Activated CD8-positive, alpha-beta memory T cell treated with anti-CD3 and anti-CD28 coated beads, Interleukin-2, amount 10 ng/mL, durations not matched to agents 7 days and 5 days (primary cell): ENCODE measurements at regions of chr11 and their contacts with region 1.

Region 1: DNA sequence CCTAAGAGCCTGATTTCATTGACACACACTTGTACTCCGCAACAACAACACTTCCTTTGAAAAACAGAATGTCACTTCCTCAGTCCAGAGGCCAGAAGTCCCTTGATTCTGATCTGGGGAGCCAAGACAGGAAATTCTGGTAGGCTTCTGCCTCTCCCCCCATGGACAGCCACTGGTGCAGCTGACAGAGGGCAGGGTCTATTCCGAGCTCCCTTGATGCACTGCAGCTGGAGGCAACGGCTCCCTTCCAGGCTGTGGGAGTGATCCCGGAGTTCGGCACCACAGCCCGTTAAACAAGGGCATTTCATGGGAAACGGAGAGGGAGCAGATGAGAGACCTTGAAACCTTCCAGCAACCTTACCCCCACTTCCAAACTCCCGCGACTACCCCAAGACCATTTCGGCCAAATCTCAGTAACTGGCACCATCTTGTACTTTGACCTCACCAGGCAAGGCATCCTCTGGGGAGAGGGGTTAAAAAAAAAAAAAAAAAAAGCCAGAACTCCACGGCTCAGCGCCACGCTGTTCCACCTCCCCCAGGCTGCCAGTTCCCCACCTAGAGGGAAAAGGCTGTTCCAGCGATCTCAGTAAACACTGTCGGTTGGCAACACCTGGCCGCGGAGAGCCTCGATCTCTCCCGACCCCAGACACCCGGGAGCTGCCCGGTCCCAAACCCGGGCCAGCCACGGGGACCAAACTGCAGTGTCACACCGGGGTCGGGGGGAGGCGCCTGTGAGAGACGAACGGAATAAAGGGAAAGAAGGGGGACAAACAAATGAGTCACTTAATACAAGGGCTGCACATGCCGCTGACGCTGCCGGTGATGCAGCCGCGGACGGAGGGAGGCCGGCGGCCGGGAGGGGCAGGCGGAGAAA is 1.1 kb downstream of the GAB2 start:
- DNase-seq: peak; percentile 90
- ATAC-seq: peak; percentile 63
- H3K4me3 Mint-ChIP-seq: peak overlapping the region; percentile 91
- H3K27ac Mint-ChIP-seq: peak overlapping the region; percentile 86
- H3K4me1 Mint-ChIP-seq: peaks cover 56% of the 10 kb centered on the region
- H3K27me3 Mint-ChIP-seq: peaks cover 18% of the 10 kb centered on the region

Region 2: DNA sequence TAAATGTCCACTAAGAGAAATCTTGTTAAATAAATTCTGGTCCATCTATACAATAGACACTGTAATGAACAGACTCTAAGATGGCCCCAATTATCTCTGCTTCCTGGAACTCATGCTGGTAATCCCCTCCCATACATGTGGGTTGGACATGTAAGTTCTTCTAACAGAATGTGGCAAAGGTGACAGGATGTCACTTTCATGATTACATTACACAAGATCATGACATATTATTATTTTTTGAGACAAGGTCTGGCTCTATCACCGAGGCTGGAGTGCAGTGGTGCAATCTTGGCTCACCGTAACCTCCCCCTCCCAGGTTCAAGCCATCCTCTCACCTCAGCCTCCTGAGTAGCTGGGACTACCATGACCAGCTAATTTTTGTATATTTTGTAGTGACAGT is 322.3 kb before region 1 on chr11:
- CTCF ChIA-PET with region 1: no interaction called
- DNase-seq: peak; percentile 45
- ATAC-seq: peak; percentile 90
- H3K4me3 Mint-ChIP-seq: no peak overlapping the region
- H3K27ac Mint-ChIP-seq: peak overlapping the region; percentile 63
- H3K4me1 Mint-ChIP-seq: peaks cover 13% of the 10 kb centered on the region
- H3K27me3 Mint-ChIP-seq: no peaks in the 10 kb centered on the region

Region 3: GRCh38 chr11:78228467-78228866 is 188.1 kb before region 1 on chr11:
- CTCF ChIA-PET with region 1: interaction called, 28 read pairs
- DNase-seq: peak; percentile 55
- ATAC-seq: peak; percentile 80
- H3K4me3 Mint-ChIP-seq: no peak overlapping the region
- H3K27ac Mint-ChIP-seq: no peak overlapping the region
- H3K4me1 Mint-ChIP-seq: peaks cover 32% of the 10 kb centered on the region
- H3K27me3 Mint-ChIP-seq: no peaks in the 10 kb centered on the region

Region 4: DNA sequence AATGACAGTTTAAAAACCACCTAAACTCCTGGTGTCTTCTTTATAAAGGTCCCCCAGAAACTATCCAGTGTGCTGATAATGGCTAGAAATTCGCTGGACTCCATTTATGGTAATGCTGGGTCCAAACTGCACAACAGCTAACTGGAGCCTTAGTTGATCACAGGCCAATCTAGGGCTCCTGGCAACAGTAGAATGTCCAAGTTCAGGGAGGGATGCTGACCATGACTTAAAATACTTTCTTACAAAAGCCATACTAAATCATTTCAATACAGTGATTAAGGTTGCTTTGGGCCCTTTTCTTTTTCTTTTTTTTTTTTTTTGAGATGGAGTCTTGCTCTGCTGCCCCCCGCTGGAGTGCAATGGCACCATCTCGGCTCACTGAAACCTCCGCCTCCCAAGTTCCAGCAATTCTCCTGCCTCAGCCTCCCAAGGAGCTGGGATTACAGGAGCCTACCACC is 15.5 kb after region 1 on chr11:
- CTCF ChIA-PET with region 1: interaction called, 47 read pairs
- DNase-seq: no peak
- ATAC-seq: no peak
- H3K4me3 Mint-ChIP-seq: no peak overlapping the region
- H3K27ac Mint-ChIP-seq: no peak overlapping the region
- H3K4me1 Mint-ChIP-seq: peaks cover 19% of the 10 kb centered on the region
- H3K27me3 Mint-ChIP-seq: no peaks in the 10 kb centered on the region

Region 5: DNA sequence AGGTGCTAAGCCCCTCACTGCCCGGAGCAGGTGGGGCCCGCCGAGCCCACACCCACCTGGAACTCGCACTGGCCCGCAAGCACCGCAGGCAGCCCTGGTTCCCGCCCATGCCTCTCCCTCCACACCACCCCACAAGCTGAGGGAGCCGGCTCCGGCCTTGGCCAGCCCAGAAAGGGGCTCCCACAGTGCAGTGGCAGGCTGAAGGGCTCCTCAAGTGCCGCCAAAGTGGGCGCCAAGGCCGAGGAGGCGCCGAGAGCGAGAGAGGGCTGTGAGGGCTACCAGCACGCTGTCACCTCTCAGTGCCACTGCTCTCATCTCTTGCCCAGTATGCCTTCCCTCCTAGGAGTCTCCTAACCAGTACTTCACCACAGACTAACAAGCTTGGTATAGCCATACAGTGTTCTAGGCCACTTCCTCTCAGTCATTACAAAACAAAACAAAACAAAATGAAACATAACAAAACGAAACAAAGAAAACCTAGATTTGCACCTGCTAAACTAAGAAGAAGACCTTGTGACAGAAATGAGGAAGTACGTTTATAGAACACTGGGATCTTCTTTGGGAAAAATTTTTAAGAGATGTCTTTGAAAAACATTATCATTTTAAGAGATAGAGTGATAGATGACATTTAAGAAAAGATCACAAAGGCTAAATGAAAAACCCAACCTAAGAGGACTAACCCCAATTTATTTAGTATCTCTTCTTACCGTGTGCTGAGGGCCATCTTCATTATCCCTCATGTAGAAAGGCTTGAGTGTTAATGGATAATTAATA is 48.8 kb after region 1 on chr11:
- CTCF ChIA-PET with region 1: interaction called, 20 read pairs
- DNase-seq: peak; percentile 81
- ATAC-seq: peak; percentile 100
- H3K4me3 Mint-ChIP-seq: peak overlapping the region; percentile 52
- H3K27ac Mint-ChIP-seq: peak overlapping the region; percentile 93
- H3K4me1 Mint-ChIP-seq: peaks cover 36% of the 10 kb centered on the region
- H3K27me3 Mint-ChIP-seq: no peaks in the 10 kb centered on the region

Region 6: DNA sequence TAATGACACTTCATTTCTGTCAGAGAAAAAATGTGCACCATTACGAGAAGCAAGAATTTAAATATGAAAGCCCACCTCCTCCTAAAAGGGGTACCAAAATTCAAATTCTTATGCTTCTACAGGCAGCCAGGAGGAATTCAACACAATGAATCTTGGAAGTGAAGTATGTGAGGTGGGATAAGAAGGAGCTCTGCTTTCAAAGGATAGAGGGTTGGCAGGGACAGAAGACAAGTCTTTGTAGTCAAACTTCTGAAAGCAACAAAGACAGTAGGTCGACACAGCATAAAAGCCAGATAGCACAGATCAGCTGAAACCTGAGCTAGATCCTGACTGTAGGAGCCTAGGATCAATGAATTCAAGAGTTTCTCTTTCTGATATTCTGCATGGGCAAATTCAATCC is 140.7 kb after region 1 on chr11:
- CTCF ChIA-PET with region 1: interaction called, 10 read pairs
- DNase-seq: no peak
- ATAC-seq: no peak
- H3K4me3 Mint-ChIP-seq: no peak overlapping the region
- H3K27ac Mint-ChIP-seq: no peak overlapping the region
- H3K4me1 Mint-ChIP-seq: peaks cover 33% of the 10 kb centered on the region
- H3K27me3 Mint-ChIP-seq: no peaks in the 10 kb centered on the region

Region 7: DNA sequence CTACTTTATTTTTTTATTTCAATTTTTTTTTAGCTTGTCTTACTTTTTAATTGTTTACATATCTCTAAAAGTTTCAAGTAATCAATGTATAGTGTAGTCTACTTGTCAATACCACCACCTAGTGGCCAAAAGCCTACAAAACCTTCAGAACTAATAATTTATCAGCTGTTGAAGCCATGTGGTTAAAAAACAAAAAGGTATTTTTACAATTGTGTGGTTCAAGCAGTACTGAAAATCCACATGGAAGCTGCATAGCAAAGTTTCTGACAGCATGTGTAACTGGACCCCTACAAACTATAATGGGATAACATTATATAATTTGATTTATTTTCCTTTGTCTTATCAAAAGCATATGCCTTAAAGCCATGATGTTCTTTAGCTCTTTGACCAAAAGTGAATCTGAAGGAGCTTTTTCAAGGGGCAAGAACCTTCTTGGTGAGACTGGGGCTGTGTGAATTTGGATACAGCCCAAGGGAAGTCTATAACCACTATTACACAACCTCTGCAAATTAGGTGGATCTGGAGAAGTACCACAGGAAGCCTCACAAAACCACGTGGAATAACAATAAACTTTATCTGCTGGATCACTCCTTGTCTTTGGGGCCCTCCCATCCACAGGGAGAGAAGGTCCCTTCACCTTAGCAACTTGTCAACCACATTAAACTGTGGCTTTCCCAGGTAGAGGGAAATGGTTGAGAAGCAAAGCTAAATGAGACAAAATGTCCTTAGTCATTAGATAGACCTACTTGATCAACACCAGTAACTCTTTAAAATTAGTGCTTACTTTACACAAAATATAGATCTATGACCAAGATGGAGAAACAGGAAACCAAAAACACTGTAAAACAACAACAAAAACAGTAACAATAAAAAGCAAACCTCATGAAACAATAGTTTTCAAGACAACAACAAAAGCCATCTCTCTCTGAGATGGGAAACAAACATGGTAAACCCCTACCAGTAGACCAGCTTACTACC is 148.2 kb after region 1 on chr11:
- CTCF ChIA-PET with region 1: interaction called, 115 read pairs
- DNase-seq: peak; percentile 58
- ATAC-seq: peak; percentile 64
- H3K4me3 Mint-ChIP-seq: no peak overlapping the region
- H3K27ac Mint-ChIP-seq: peak overlapping the region; percentile 46
- H3K4me1 Mint-ChIP-seq: peaks cover 38% of the 10 kb centered on the region
- H3K27me3 Mint-ChIP-seq: no peaks in the 10 kb centered on the region

Region 8: DNA sequence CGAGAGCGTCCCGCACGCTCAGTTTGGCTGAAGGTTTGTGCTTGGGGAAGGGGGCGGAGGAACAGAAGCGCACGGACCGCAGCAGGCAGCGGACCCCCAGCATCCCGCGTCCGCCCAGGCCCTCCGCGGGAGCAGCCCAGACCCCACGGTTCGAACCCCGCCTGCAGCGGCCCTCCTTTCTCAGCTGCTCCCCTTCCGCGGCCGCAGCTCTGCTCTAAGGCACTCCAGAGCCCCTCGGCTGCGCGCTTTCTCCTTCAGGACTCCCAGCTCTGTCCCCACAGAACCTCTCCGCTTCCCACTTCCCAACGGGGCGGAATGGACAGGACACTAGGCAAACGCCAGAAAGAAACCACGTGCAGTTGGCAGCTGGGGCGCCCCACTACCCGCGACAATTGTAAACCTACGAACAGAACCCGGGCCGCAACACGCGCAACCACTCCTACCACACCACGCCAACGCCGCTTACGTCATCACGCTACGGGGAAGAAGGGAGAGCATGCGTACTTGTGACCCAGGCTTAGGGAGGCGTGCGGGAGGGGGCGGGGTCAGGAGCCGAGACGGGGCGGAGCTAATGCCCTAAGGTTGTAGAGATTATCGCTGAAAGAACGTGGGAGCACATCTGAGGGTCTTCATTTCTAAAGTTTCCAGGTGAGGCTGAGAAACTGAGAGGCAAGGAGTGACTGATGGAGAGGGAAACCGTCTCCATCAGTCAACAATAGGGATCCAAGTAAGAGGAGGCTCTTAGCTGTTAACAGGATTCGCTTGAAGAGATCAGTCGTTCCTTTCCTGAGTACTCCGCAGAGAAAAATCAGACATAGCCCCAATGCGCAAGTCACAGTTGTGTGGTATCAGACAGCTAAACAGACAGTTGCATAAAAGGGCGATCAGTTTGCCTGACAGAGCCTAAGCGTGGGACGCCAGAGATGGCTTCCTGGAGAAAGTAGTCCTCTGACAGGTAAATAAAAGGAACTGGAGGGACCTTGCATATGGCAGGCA is 158.1 kb after region 1 on chr11 and contains the start of gene NARS2:
- CTCF ChIA-PET with region 1: interaction called, 21 read pairs
- DNase-seq: peak; percentile 99
- ATAC-seq: peak; percentile 98
- H3K4me3 Mint-ChIP-seq: peak within 1 kb of the TSS; percentile 98
- H3K27ac Mint-ChIP-seq: peak within 1 kb of the TSS; percentile 95
- H3K4me1 Mint-ChIP-seq: peaks cover 24% of the 10 kb centered on the region
- H3K27me3 Mint-ChIP-seq: peaks cover 5% of the 10 kb centered on the region
- total RNA-seq, gene NARS2: 20.0 TPM